Natural killer cell (primary cell): ENCODE measurements at regions of chr11 and their contacts with region 1.

Region 1: GRCh38 chr11:104705490-104706190 is 192.6 kb downstream of the CASP12 start:
- DNase-seq: peak; percentile 47 to 89
- ATAC-seq: peak; percentile 93 to 98 (median 97)
- H3K4me3 ChIP-seq: peak overlapping the region; percentile 37
- H3K4me3 Mint-ChIP-seq: peak overlapping the region; percentile 86
- H3K27ac ChIP-seq: peak overlapping the region; percentile 95
- H3K27ac Mint-ChIP-seq: peak overlapping the region; percentile 96
- H3K4me1 ChIP-seq: peaks cover 18% of the 10 kb centered on the region
- H3K4me1 Mint-ChIP-seq: peaks cover 54 to 55% of the 10 kb centered on the region in 2 donors
- H3K27me3 ChIP-seq: no peaks in the 10 kb centered on the region
- H3K27me3 Mint-ChIP-seq: no peaks in the 10 kb centered on the region
- CTCF ChIP-seq: no peak

Region 2: GRCh38 chr11:104390651-104391050 is 315.0 kb before region 1 on chr11:
- intact Hi-C with region 1: no loop called
- DNase-seq: no peak
- ATAC-seq: no peak
- H3K4me3 ChIP-seq: no peak overlapping the region
- H3K4me3 Mint-ChIP-seq: no peak overlapping the region
- H3K27ac ChIP-seq: no peak overlapping the region
- H3K27ac Mint-ChIP-seq: no peak overlapping the region
- H3K4me1 ChIP-seq: no peaks in the 10 kb centered on the region
- H3K4me1 Mint-ChIP-seq: no peaks in the 10 kb centered on the region
- H3K27me3 ChIP-seq: no peaks in the 10 kb centered on the region
- H3K27me3 Mint-ChIP-seq: no peaks in the 10 kb centered on the region
- CTCF ChIP-seq: no peak

Region 3: DNA sequence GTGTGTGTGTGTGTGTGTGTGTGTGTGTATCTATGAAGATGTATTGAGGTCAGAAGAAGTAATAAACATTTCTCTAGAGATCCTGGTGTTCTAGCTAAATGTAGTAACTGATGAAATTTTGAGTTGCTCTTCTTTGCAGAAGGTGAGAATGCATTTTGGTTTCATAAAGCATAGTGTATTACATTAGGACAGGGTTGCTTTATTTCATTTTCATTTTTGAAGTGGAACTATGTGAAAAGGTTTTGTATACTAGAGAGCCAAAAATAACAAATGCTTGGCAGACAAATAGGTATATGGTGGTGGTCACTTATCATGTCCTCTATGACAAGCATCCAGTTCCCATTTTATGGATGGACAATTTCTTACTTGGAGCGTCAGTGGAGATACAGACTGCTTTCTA is 93.6 kb after region 1 on chr11:
- intact Hi-C with region 1: loop called (anchors 5 kb)
- DNase-seq: peak in 1 of 2 donors; percentile 21
- ATAC-seq: peak; percentile 71 to 80 (median 78)
- H3K4me3 ChIP-seq: peak overlapping the region; percentile 52
- H3K4me3 Mint-ChIP-seq: peak overlapping the region; percentile 91
- H3K27ac ChIP-seq: peak overlapping the region; percentile 66
- H3K27ac Mint-ChIP-seq: peak overlapping the region; percentile 86 to 91
- H3K4me1 ChIP-seq: peaks cover 4% of the 10 kb centered on the region
- H3K4me1 Mint-ChIP-seq: peaks cover 19 to 21% of the 10 kb centered on the region in 2 donors
- H3K27me3 ChIP-seq: no peaks in the 10 kb centered on the region
- H3K27me3 Mint-ChIP-seq: no peaks in the 10 kb centered on the region
- CTCF ChIP-seq: no peak

Region 4: GRCh38 chr11:104876861-104877431 is 171.3 kb after region 1 on chr11:
- intact Hi-C with region 1: loop called (anchors 10 kb)
- DNase-seq: peak in 1 of 2 donors; percentile 60
- ATAC-seq: peak; percentile 89 to 90 (median 89)
- H3K4me3 ChIP-seq: no peak overlapping the region
- H3K4me3 Mint-ChIP-seq: peak overlapping the region; percentile 88
- H3K27ac ChIP-seq: peak overlapping the region; percentile 70
- H3K27ac Mint-ChIP-seq: peak overlapping the region; percentile 93 to 94
- H3K4me1 ChIP-seq: peaks cover 10% of the 10 kb centered on the region
- H3K4me1 Mint-ChIP-seq: peaks cover 51 to 52% of the 10 kb centered on the region in 2 donors
- H3K27me3 ChIP-seq: no peaks in the 10 kb centered on the region
- H3K27me3 Mint-ChIP-seq: no peaks in the 10 kb centered on the region
- CTCF ChIP-seq: no peak

Region 5: GRCh38 chr11:104918113-104918824 is 212.6 kb after region 1 on chr11:
- intact Hi-C with region 1: loop called (anchors 5 kb)
- DNase-seq: peak in 1 of 2 donors; percentile 59
- ATAC-seq: peak; percentile 81 to 88 (median 85)
- H3K4me3 ChIP-seq: peak overlapping the region; percentile 47
- H3K4me3 Mint-ChIP-seq: peak overlapping the region; percentile 97
- H3K27ac ChIP-seq: peak overlapping the region; percentile 72
- H3K27ac Mint-ChIP-seq: peak overlapping the region; percentile 83 to 84
- H3K4me1 ChIP-seq: peaks cover 5% of the 10 kb centered on the region
- H3K4me1 Mint-ChIP-seq: peaks cover 44% of the 10 kb centered on the region in 2 donors
- H3K27me3 ChIP-seq: no peaks in the 10 kb centered on the region
- H3K27me3 Mint-ChIP-seq: no peaks in the 10 kb centered on the region
- CTCF ChIP-seq: no peak

Region 6: DNA sequence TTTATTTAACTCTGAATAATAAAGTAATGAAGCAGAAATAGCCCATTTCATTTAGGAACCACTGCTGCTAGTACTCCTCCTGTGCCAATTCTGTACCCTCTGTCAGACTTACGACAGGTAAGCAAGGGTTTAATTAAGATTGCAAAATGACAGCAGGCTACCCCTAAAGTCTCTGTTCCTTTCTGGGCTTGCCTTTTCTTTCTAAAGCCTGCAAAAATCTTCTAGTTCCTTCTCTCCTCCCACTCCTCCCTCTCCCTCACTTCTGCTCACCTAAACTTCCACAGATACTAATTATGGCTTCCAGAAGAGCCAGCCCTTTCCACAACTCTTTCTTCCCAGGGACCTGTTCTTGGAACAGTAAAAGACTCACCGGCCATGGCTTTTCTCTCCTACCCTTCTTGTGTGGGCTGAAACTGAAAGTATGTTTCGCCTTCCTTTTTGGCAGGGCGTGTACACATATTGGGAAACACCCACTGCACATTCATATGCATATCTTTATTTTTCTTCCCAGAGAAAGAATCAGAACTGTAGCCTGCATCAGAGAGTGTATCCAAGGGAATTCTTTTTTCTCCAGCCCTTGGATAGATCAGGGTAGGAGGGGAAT is 339.4 kb after region 1 on chr11 and contains the start of gene CARD16:
- intact Hi-C with region 1: loop called (anchors 10 kb)
- DNase-seq: peak in 1 of 2 donors; percentile 78
- ATAC-seq: peak; percentile 86 to 93 (median 87)
- H3K4me3 ChIP-seq: peak within 1 kb of the TSS; percentile 48
- H3K4me3 Mint-ChIP-seq: peak within 1 kb of the TSS; percentile 94
- H3K27ac ChIP-seq: peak within 1 kb of the TSS; percentile 71
- H3K27ac Mint-ChIP-seq: peak within 1 kb of the TSS; percentile 90 to 92
- H3K4me1 ChIP-seq: peaks cover 12% of the 10 kb centered on the region
- H3K4me1 Mint-ChIP-seq: peaks cover 49 to 65% of the 10 kb centered on the region in 2 donors
- H3K27me3 ChIP-seq: no peaks in the 10 kb centered on the region
- H3K27me3 Mint-ChIP-seq: no peaks in the 10 kb centered on the region
- CTCF ChIP-seq: no peak
- total RNA-seq, gene CARD16: 54.7 to 113 (median 110) TPM

Region 7: GRCh38 chr11:106021967-106022794 is 1316.5 kb after region 1 on chr11 and contains the start of gene MSANTD4:
- intact Hi-C with region 1: loop called (anchors 5 kb)
- DNase-seq: peak; percentile 96 to 98
- ATAC-seq: peak; percentile 94 to 99 (median 95)
- H3K4me3 ChIP-seq: peak within 1 kb of the TSS; percentile 95
- H3K4me3 Mint-ChIP-seq: peak within 1 kb of the TSS; percentile 97
- H3K27ac ChIP-seq: peak within 1 kb of the TSS; percentile 73
- H3K27ac Mint-ChIP-seq: peak within 1 kb of the TSS; percentile 89 to 99
- H3K4me1 ChIP-seq: peaks cover 7% of the 10 kb centered on the region
- H3K4me1 Mint-ChIP-seq: peaks cover 44 to 50% of the 10 kb centered on the region in 2 donors
- H3K27me3 ChIP-seq: no peaks in the 10 kb centered on the region
- H3K27me3 Mint-ChIP-seq: peaks cover 16 to 22% of the 10 kb centered on the region in 2 donors
- CTCF ChIP-seq: no peak
- total RNA-seq, gene MSANTD4: 5.1 to 8.7 (median 7.2) TPM